ENCODE measurements at regions of chr1 and their contacts with region 1.

Region 1: DNA sequence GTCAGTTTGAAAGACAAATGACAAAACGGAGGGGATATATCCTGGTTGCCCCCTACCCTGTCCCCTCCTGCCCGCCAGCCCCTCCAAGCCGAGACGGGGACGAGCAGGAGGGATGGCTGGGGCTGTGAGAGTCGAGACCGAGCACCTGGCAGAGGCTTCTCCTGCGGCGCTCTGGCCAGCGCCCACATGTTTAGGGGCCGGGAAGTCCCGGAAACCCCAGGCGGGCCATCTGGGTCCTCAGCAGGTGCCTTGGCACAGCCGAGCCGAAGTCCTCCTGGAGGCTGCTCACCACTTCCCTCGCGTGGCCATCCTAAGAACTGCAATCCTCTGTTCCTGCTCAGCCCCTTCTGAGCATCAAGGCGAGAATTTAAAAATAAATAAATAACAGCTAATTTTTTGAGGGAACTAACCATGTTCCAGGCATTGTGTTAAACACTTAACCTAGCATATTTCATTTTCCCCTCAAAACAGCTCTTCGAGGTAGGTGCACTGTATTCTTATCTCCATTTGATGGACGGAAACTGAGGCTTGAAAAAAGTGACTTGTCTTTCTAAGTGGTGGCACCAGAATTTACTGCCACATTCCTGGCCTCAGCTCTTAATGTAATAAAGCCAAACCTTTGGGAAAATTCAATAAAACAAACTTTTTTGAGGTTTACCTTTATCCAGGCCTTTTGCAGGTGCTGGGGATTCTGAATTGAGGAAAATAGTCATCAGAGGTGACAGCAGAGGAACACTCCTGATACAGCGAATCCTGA is 3.5 kb upstream of the RIMS3 start:
- DNase-seq: peak; percentile 75
- H3K4me3 Mint-ChIP-seq: no peak overlapping the region
- H3K27ac Mint-ChIP-seq: no peak overlapping the region
- H3K4me1 Mint-ChIP-seq: no peaks in the 10 kb centered on the region
- H3K27me3 Mint-ChIP-seq: no peaks in the 10 kb centered on the region
- CTCF ChIP-seq: peak; percentile 87

Region 2: GRCh38 chr1:40143891-40144575 is 524.9 kb before region 1 on chr1:
- CTCF ChIA-PET with region 1: interaction called, 3 read pairs
- POLR2A ChIA-PET with region 1: no interaction called
- intact Hi-C with region 1: loop called (anchors 10 kb)
- DNase-seq: peak; percentile 87
- H3K4me3 Mint-ChIP-seq: no peak overlapping the region
- H3K27ac Mint-ChIP-seq: no peak overlapping the region
- H3K4me1 Mint-ChIP-seq: peaks cover 10% of the 10 kb centered on the region
- H3K27me3 Mint-ChIP-seq: peaks cover 74% of the 10 kb centered on the region
- CTCF ChIP-seq: peak; percentile 61

Region 3: GRCh38 chr1:40612345-40612831 is 56.6 kb before region 1 on chr1:
- CTCF ChIA-PET with region 1: interaction called, 11 read pairs
- POLR2A ChIA-PET with region 1: interaction called, 3 read pairs
- intact Hi-C with region 1: loop called (anchors 1 kb)
- DNase-seq: peak; percentile 78
- H3K4me3 Mint-ChIP-seq: no peak overlapping the region
- H3K27ac Mint-ChIP-seq: no peak overlapping the region
- H3K4me1 Mint-ChIP-seq: peaks cover 12% of the 10 kb centered on the region
- H3K27me3 Mint-ChIP-seq: no peaks in the 10 kb centered on the region
- CTCF ChIP-seq: peak; percentile 89

Region 4: GRCh38 chr1:40679165-40679953 is 10.4 kb after region 1 on chr1:
- CTCF ChIA-PET with region 1: interaction called, 26 read pairs
- POLR2A ChIA-PET with region 1: no interaction called
- intact Hi-C with region 1: no loop called
- DNase-seq: no peak
- H3K4me3 Mint-ChIP-seq: no peak overlapping the region
- H3K27ac Mint-ChIP-seq: no peak overlapping the region
- H3K4me1 Mint-ChIP-seq: no peaks in the 10 kb centered on the region
- H3K27me3 Mint-ChIP-seq: no peaks in the 10 kb centered on the region
- CTCF ChIP-seq: no peak

Region 5: DNA sequence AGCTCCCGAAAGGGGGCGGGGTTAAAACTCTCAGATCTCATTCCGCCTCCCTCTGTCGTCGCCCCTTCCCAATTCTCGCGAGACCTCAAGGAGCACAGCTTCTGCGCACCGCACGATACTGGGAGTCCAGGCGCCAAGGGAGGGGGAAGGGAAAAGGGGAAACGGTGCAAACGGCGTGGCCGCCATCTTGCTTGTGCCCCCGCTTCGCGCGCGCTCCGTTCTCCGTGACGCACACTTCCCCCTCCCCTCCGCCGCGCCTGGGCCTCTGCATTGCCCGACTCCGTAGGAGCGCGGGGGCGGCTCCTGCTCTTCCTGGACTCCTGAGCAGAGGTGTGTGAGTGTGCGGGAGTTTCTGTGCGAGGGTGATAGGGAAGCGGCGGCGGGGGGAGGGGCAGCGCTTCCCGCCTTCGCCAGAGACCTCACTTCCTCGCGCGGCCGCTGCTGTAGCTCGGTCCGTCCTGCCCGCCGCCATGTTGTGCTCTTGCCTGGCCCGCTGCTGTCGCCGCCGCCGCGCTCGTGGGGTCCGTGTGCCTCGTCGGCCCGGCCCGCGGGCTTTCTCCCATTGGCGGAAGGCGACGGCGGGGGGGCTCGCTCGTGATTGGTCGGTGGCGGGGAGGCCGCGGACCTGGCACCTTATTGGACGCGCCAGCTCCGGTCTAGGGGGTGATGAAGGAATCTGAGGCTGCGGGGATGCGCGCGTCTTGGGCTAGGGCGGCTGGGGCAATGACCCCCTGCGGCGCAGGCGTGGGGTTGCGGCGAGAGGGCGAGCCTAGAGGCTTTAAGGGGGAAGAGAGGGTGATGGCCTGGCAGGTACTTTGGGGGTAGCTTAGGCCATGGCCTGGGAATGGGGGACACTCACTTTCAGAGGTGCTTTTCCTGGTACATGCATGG is 22.8 kb after region 1 on chr1 and contains the start of gene NFYC:
- CTCF ChIA-PET with region 1: interaction called, 19 read pairs
- POLR2A ChIA-PET with region 1: interaction called, 12 read pairs
- intact Hi-C with region 1: no loop called
- DNase-seq: peak; percentile 100
- H3K4me3 Mint-ChIP-seq: peak within 1 kb of the TSS; percentile 75
- H3K27ac Mint-ChIP-seq: peak within 1 kb of the TSS; percentile 44
- H3K4me1 Mint-ChIP-seq: peaks cover 22% of the 10 kb centered on the region
- H3K27me3 Mint-ChIP-seq: no peaks in the 10 kb centered on the region
- CTCF ChIP-seq: no peak
- total RNA-seq, gene NFYC: 66.4 and 69.6 TPM in 2 replicates